ENCODE measurements at regions of chr12 and their contacts with region 1.

Region 1: GRCh38 chr12:71135812-71136176 is 22.0 kb downstream of the TSPAN8 start:
- DNase-seq: no peak
- ATAC-seq: no peak
- H3K4me3 ChIP-seq: no peak overlapping the region
- H3K27ac ChIP-seq: no peak overlapping the region
- H3K4me1 ChIP-seq: 0 out of 2 replicates have a peak, but pooled peaks cover 2% of the 10 kb centered on the region
- H3K27me3 ChIP-seq: no peaks in the 10 kb centered on the region
- CTCF ChIP-seq: no peak

Region 2: DNA sequence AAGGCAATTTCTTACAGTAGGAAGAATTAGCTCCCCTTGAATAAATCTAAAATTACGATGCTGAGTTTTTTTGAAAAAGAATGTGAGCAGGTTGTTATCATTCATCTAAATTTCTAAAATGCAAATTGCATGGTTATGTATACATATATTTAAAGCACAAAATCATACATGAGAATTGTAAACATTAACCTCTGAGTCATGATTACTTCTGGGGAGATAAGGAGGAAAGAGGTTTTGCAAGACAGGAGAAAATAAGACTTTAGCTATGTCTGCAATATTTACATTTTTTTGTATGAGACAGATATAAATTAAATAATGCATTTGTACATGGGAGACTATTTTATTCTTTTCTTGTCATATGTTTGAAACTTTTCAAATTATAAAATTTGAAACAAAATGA is 50.2 kb before region 1 on chr12:
- CTCF ChIA-PET with region 1: no interaction called
- POLR2A ChIA-PET with region 1: no interaction called
- in situ Hi-C with region 1: no loop called
- intact Hi-C with region 1: loop called (anchors 10 kb)
- DNase-seq: no peak
- ATAC-seq: no peak
- H3K4me3 ChIP-seq: no peak overlapping the region
- H3K27ac ChIP-seq: no peak overlapping the region
- H3K4me1 ChIP-seq: no peaks in the 10 kb centered on the region
- H3K27me3 ChIP-seq: no peaks in the 10 kb centered on the region
- CTCF ChIP-seq: no peak